Colonic mucosa (tissue), 4 donors: ENCODE measurements at regions of chrX and their contacts with region 1.

Region 1: GRCh38 chrX:74343343-74344279 is 39.6 kb downstream of the ZCCHC13 start:
- DNase-seq: peak; percentile 73
- H3K4me3 ChIP-seq: no peak overlapping the region
- H3K27ac ChIP-seq: no peak overlapping the region
- H3K4me1 ChIP-seq: no peaks in the 10 kb centered on the region
- H3K27me3 ChIP-seq: no peaks in the 10 kb centered on the region
- CTCF ChIP-seq: peak; percentile 51

Region 2: DNA sequence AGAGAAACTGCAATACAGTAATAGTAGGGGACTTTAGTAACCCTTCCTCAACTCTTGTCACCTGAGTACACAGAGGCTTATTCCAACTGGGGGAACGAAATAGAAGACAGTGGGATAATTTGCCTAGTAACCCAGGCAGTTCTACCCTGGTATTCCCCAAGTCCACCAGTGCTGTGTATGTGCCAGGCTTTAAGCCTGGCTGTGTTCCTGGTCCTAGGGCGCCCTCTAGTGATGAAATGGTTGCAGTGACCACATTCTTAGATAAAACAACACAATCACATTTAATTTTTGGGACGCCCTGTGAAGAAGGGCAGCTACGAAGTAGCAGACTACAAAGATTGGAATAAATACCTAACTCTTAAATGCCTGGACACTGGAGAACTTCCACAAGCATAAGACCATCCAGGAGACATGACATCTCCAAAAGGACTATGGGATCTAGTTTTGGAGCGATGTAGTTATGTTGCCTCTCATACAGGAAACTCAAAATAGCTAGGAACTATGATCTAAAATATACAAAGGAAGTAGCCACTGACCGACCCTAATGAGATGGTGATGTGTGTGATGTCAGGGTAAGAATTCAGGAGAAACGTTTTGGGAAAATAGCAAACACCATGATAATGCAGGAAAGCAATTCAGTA is 328.1 kb before region 1 on chrX:
- intact Hi-C with region 1: loop called (anchors 10 kb)
- DNase-seq: peak; percentile 74
- H3K4me3 ChIP-seq: no peak overlapping the region
- H3K27ac ChIP-seq: no peak overlapping the region
- H3K4me1 ChIP-seq: no peaks in the 10 kb centered on the region
- H3K27me3 ChIP-seq: no peaks in the 10 kb centered on the region
- CTCF ChIP-seq: peak; percentile 80

Region 3: GRCh38 chrX:74133156-74133796 is 210.3 kb before region 1 on chrX:
- intact Hi-C with region 1: loop called (anchors 10 kb)
- DNase-seq: peak; percentile 27
- H3K4me3 ChIP-seq: no peak overlapping the region
- H3K27ac ChIP-seq: no peak overlapping the region
- H3K4me1 ChIP-seq: no peaks in the 10 kb centered on the region
- H3K27me3 ChIP-seq: no peaks in the 10 kb centered on the region
- CTCF ChIP-seq: peak; percentile 75